CD4-positive, alpha-beta T cell (primary cell): ENCODE measurements at regions of chr9 and their contacts with region 1.

Region 1: DNA sequence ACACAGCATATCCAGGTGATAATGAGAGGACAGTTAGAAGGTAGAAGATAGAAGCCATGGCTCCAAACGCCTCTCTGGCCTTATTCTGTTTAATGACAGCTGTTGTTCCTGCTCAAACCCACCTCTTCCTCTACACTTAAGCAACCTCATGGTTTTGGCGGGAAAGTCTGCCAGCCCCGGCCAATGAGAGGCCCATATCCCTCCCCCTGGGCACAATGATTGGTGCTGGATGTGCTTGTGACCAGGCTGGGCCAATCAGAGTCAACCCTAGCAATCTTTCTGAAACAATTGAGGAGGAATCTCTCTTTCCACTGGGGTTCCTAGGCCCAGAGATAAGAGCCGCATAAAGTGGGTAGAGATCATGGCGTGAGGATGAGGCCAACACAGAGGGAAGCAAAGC is 4.8 kb upstream of the GFI1B start:
- DNase-seq: peak in 2 of 14 experiments; percentile 18 to 33
- ATAC-seq: no peak
- H3K4me3 ChIP-seq: no peak overlapping the region
- H3K4me3 Mint-ChIP-seq: no peak overlapping the region
- H3K27ac ChIP-seq: no peak overlapping the region
- H3K27ac Mint-ChIP-seq: no peak overlapping the region
- H3K4me1 ChIP-seq: peaks cover 15% of the 10 kb centered on the region
- H3K4me1 Mint-ChIP-seq: peaks cover 5% of the 10 kb centered on the region
- H3K27me3 ChIP-seq: peaks cover 15 to 27% of the 10 kb centered on the region in 2 experiments
- H3K27me3 Mint-ChIP-seq: peaks cover 50% of the 10 kb centered on the region
- CTCF ChIP-seq: no peak

Region 2: GRCh38 chr9:132412089-132412488 is 561.6 kb before region 1 on chr9:
- CTCF ChIA-PET with region 1: no interaction called
- POLR2A ChIA-PET with region 1: no interaction called
- intact Hi-C with region 1: loop called (anchors 2 to 10 kb)
- DNase-seq: peak in 5 of 14 experiments; percentile 6 to 60 (median 27)
- ATAC-seq: no peak
- H3K4me3 ChIP-seq: no peak overlapping the region
- H3K4me3 Mint-ChIP-seq: peak overlapping the region; percentile 25
- H3K27ac ChIP-seq: no peak overlapping the region
- H3K27ac Mint-ChIP-seq: no peak overlapping the region
- H3K4me1 ChIP-seq: peaks cover 33% of the 10 kb centered on the region
- H3K4me1 Mint-ChIP-seq: peaks cover 30% of the 10 kb centered on the region
- H3K27me3 ChIP-seq: peaks cover 46 to 65% of the 10 kb centered on the region in 2 experiments
- H3K27me3 Mint-ChIP-seq: peaks cover 65% of the 10 kb centered on the region
- CTCF ChIP-seq: peak; percentile 25

Region 3: GRCh38 chr9:132800038-132800648 is 173.6 kb before region 1 on chr9:
- CTCF ChIA-PET with region 1: no interaction called
- POLR2A ChIA-PET with region 1: no interaction called
- intact Hi-C with region 1: loop called in 1 of 2 experiments (anchors 5 kb)
- DNase-seq: peak; percentile 35 to 84 (median 58)
- ATAC-seq: peak; percentile 98
- H3K4me3 ChIP-seq: no peak overlapping the region
- H3K4me3 Mint-ChIP-seq: no peak overlapping the region
- H3K27ac ChIP-seq: no peak overlapping the region
- H3K27ac Mint-ChIP-seq: no peak overlapping the region
- H3K4me1 ChIP-seq: peaks cover 15% of the 10 kb centered on the region
- H3K4me1 Mint-ChIP-seq: no peaks in the 10 kb centered on the region
- H3K27me3 ChIP-seq: peaks cover 9 to 13% of the 10 kb centered on the region in 2 experiments
- H3K27me3 Mint-ChIP-seq: peaks cover 67% of the 10 kb centered on the region
- CTCF ChIP-seq: peak; percentile 92

Region 4: GRCh38 chr9:132901856-132902831 is 71.6 kb before region 1 on chr9:
- CTCF ChIA-PET with region 1: interaction called, 3 read pairs
- POLR2A ChIA-PET with region 1: no interaction called
- intact Hi-C with region 1: loop called in 1 of 2 experiments (anchors 2 kb)
- DNase-seq: peak; percentile 58 to 91 (median 76)
- ATAC-seq: peak; percentile 99
- H3K4me3 ChIP-seq: no peak overlapping the region
- H3K4me3 Mint-ChIP-seq: no peak overlapping the region
- H3K27ac ChIP-seq: no peak overlapping the region
- H3K27ac Mint-ChIP-seq: peak overlapping the region; percentile 70
- H3K4me1 ChIP-seq: no peaks in the 10 kb centered on the region
- H3K4me1 Mint-ChIP-seq: peaks cover 5% of the 10 kb centered on the region
- H3K27me3 ChIP-seq: no peaks in the 10 kb centered on the region
- H3K27me3 Mint-ChIP-seq: no peaks in the 10 kb centered on the region
- CTCF ChIP-seq: peak; percentile 97

Region 5: GRCh38 chr9:133485361-133486260 is 511.9 kb after region 1 on chr9:
- CTCF ChIA-PET with region 1: no interaction called
- POLR2A ChIA-PET with region 1: no interaction called
- intact Hi-C with region 1: loop called in 1 of 2 experiments (anchors 5 kb)
- DNase-seq: peak in 4 of 14 experiments; percentile 15 to 45 (median 28)
- ATAC-seq: peak; percentile 12
- H3K4me3 ChIP-seq: no peak overlapping the region
- H3K4me3 Mint-ChIP-seq: no peak overlapping the region
- H3K27ac ChIP-seq: no peak overlapping the region
- H3K27ac Mint-ChIP-seq: no peak overlapping the region
- H3K4me1 ChIP-seq: peaks cover 6% of the 10 kb centered on the region
- H3K4me1 Mint-ChIP-seq: peaks cover 6% of the 10 kb centered on the region
- H3K27me3 ChIP-seq: no peaks in the 10 kb centered on the region
- H3K27me3 Mint-ChIP-seq: no peaks in the 10 kb centered on the region
- CTCF ChIP-seq: no peak